Activated CD4-positive, alpha-beta memory T cell treated with anti-CD3 and anti-CD28 coated beads, Interleukin-2, amount 10 ng/mL, durations not matched to agents 7 days and 5 days (primary cell): ENCODE measurements at regions of chr17 and their contacts with region 1.

Region 1: GRCh38 chr17:82065638-82066303 is at the start of gene DUS1L:
- DNase-seq: peak; percentile 78
- H3K4me3 Mint-ChIP-seq: peak within 1 kb of the TSS; percentile 82
- H3K27ac Mint-ChIP-seq: peak within 1 kb of the TSS; percentile 82
- H3K4me1 Mint-ChIP-seq: peaks cover 17% of the 10 kb centered on the region
- H3K27me3 Mint-ChIP-seq: peaks cover 2% of the 10 kb centered on the region
- total RNA-seq, gene DUS1L: 98.8 to 99.3 TPM

Region 2: GRCh38 chr17:81821603-81822311 is 244.0 kb before region 1 on chr17:
- CTCF ChIA-PET with region 1: no interaction called
- POLR2A ChIA-PET with region 1: no interaction called
- DNase-seq: peak; percentile 60
- H3K4me3 Mint-ChIP-seq: no peak overlapping the region
- H3K27ac Mint-ChIP-seq: peak overlapping the region; percentile 44
- H3K4me1 Mint-ChIP-seq: peaks cover 13% of the 10 kb centered on the region
- H3K27me3 Mint-ChIP-seq: peaks cover 6% of the 10 kb centered on the region

Region 3: GRCh38 chr17:81927653-81928543 is 137.9 kb before region 1 on chr17 and contains the start of gene MAFG:
- CTCF ChIA-PET with region 1: no interaction called
- POLR2A ChIA-PET with region 1: no interaction called
- DNase-seq: peak; percentile 91
- H3K4me3 Mint-ChIP-seq: peak within 1 kb of the TSS; percentile 91
- H3K27ac Mint-ChIP-seq: peak within 1 kb of the TSS; percentile 94
- H3K4me1 Mint-ChIP-seq: peaks cover 35% of the 10 kb centered on the region
- H3K27me3 Mint-ChIP-seq: peaks cover 4% of the 10 kb centered on the region
- total RNA-seq, gene MAFG: 35.2 to 36.5 TPM

Region 4: DNA sequence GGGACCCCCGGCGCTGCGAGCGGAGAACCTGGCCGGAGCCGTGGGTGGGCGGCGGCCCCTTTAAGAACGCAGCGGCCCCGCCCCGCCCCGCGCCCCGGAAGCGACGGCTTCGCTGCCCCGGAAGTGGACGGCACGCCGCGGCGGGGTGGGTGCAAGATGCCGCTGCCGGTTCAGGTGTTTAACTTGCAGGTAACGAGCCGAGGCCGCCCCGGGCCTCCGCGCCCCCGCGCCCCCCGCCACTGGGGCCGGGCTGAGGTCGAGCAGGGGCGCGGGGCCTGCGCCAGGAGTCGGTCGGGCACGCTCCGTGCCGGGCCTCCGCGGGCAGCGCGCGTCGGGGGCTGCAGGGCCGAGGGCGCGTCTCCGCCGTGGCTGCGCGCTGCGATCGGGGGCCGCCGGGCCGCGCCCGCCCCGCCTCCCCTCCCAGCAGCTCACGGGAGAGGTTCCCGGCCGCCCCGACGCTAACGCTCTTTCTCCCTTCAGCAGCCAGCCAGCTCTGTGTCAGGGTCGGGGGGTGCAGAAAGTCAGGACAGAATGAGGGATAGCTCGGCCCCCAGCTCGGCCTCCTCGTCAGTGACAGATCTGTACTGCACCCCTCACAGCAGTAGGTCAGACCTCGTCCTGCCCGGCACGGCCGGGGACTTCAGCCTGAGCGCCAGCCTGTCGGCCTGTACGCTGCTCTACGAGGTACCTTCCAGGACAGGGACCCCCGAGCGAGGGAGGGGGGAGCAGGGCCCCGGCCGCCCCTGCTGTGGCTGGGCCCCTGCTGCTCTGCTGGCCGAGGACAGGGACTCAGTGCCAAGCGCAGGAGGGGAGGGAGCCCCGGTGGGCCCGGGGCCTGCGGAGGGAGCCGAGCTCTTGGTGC is 13.8 kb before region 1 on chr17 and contains the starts of genes GPS1 and RFNG:
- CTCF ChIA-PET with region 1: no interaction called
- POLR2A ChIA-PET with region 1: interaction called, 10 read pairs
- DNase-seq: peak; percentile 85
- H3K4me3 Mint-ChIP-seq: peak within 1 kb of the TSS; percentile 84
- H3K27ac Mint-ChIP-seq: peak within 1 kb of the TSS; percentile 78
- H3K4me1 Mint-ChIP-seq: peaks cover 25% of the 10 kb centered on the region
- H3K27me3 Mint-ChIP-seq: no peaks in the 10 kb centered on the region
- total RNA-seq, gene GPS1: 69.0 to 75.6 TPM
- total RNA-seq, gene RFNG: 26.3 to 28.4 TPM

Region 5: DNA sequence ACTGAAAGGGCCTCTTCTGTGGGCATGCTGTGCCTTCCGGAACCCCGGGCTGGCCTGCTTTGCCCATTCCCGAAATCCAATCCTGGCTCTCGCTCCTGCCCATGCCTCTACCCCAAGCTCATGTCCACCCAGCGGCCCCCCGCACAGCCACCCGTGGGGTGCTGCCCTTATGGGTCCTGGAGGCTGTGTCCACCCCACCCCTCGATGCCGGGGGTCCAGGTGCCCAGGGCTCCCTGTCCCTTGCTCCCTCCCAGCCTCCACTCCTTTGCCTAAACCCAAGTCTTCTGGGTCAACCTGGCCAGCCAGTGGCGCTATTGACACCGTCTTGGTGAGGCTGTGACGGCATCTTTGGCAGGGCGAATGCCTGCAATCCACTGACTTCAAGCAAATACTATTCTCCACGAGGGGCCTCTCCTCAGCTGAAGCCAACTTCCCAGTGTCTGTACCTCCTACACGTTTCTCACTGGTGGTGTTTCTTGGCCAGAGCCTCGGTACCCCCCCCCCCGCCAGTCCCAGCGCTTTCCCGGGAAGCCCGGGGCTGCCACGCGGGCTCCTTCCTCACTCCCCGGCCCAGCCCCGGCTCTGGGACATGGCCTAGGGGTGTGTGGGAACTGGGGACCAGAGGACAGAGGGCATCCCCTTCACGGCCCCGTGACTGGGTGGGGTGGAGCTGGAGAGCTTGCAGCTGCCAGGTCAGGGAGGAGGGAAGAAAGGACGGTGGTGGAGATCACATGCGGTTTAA is 12.0 kb after region 1 on chr17:
- CTCF ChIA-PET with region 1: no interaction called
- POLR2A ChIA-PET with region 1: interaction called, 14 read pairs
- DNase-seq: no peak
- H3K4me3 Mint-ChIP-seq: no peak overlapping the region
- H3K27ac Mint-ChIP-seq: no peak overlapping the region
- H3K4me1 Mint-ChIP-seq: no peaks in the 10 kb centered on the region
- H3K27me3 Mint-ChIP-seq: peaks cover 2% of the 10 kb centered on the region